ENCODE measurements at regions of chr10 and their contacts with region 1.

Region 1: GRCh38 chr10:77641788-77642397 is 4.3 kb upstream of the KCNMA1 start:
- DNase-seq: peak in 1 of 2 donors; percentile 66
- ATAC-seq: no peak
- H3K4me3 ChIP-seq: no peak overlapping the region
- H3K27ac ChIP-seq: no peak overlapping the region
- H3K4me1 ChIP-seq: peaks cover 0 to 14% (median 5%) of the 10 kb centered on the region in 9 donors
- H3K27me3 ChIP-seq: peaks cover 8 to 69% (median 50%) of the 10 kb centered on the region in 7 donors
- CTCF ChIP-seq: peak; percentile 67 to 86 (median 81)

Region 2: DNA sequence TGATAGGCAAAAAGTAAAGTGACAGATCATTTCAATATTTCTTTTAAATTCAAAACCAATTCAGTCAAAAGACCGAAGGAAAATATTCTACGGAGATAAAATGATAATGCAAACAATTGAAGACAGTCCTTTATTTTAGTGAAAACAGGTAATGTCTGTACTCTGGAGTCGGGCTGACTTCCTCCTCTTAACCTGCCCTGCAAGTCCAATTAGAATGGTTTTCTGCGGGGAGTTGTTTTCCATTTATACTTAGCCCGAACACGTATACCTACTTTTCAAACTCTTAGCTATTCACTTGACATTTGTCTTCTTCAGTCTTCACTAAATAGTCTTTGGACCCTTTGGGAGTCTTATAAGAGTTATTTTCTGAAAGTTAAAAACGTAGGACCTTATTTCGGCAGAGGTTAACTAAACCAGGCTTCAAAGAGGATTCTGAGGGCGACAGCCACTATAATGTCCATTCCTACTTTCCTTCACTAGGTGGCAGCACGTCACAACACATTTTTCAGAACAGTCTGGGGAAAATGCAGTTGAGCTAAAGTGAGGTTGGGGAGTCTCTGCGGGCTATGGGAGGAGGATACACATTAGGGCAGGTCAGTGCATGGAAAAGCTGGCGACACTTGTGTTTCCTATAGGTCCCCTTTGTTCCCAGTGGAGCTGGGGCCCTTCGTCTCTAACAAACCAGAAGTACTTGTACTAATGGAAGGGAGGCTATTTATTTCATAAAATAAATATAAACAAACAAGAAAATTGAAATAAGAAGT is 476.3 kb before region 1 on chr10:
- intact Hi-C with region 1: loop called in 2 of 10 experiments (anchors 2 to 5 kb)
- DNase-seq: peak in 1 of 2 donors; percentile 14
- ATAC-seq: peak in 7 of 8 donors; percentile 29 to 66 (median 56)
- H3K4me3 ChIP-seq: no peak overlapping the region
- H3K27ac ChIP-seq: no peak overlapping the region
- H3K4me1 ChIP-seq: peaks cover 0 to 19% (median 0%) of the 10 kb centered on the region in 9 donors
- H3K27me3 ChIP-seq: peaks cover 0 to 32% (median 19%) of the 10 kb centered on the region in 7 donors
- CTCF ChIP-seq: peak; percentile 47 to 80 (median 76)

Region 3: DNA sequence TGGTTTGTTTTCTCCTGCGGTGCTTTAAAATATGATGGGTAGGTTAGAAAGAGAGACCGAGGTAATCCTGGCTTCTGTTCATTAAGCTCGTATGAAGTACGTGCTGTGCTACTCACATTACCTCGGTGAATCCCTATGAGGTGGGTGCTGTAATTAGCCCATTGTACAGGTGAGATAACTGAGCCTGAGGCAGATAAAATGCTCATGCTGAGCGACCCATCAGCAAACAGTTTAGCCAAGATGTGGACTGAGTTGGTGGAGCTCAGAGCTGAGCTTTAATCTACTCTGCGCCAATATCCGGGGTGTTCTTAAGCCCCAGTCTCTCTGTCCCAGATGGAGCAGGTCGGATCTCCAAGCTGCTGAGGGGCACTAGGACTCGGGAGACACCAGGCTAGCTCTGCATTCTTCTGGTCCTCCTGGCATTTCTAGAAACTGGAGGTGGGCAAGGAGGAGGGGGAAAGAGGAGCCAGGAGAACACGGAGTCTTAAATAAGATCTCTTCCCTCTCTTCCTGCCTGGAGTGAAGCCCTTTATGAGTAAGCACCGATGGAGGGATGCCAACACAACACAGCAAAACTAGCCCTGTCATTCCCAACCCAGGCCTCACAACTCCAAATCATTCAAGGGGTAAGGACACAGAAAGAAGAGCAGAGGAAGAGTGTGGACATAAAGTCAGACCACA is 462.7 kb before region 1 on chr10:
- intact Hi-C with region 1: loop called in 8 of 10 experiments (anchors 1 to 5 kb)
- DNase-seq: peak in 1 of 2 donors; percentile 32
- ATAC-seq: peak in 3 of 8 donors; percentile 23 to 81 (median 35)
- H3K4me3 ChIP-seq: no peak overlapping the region
- H3K27ac ChIP-seq: no peak overlapping the region
- H3K4me1 ChIP-seq: peaks cover 0 to 14% (median 0%) of the 10 kb centered on the region in 9 donors
- H3K27me3 ChIP-seq: peaks cover 0 to 25% (median 8%) of the 10 kb centered on the region in 7 donors
- CTCF ChIP-seq: no peak

Region 4: GRCh38 chr10:77251297-77252013 is 390.4 kb before region 1 on chr10:
- intact Hi-C with region 1: loop called in 1 of 10 experiments (anchors 5 kb)
- DNase-seq: no peak
- ATAC-seq: no peak
- H3K4me3 ChIP-seq: no peak overlapping the region
- H3K27ac ChIP-seq: no peak overlapping the region
- H3K4me1 ChIP-seq: peaks cover 0 to 14% (median 3%) of the 10 kb centered on the region in 9 donors
- H3K27me3 ChIP-seq: peaks cover 0 to 14% (median 7%) of the 10 kb centered on the region in 7 donors
- CTCF ChIP-seq: peak in 6 of 9 donors; percentile 16 to 48 (median 38)

Region 5: DNA sequence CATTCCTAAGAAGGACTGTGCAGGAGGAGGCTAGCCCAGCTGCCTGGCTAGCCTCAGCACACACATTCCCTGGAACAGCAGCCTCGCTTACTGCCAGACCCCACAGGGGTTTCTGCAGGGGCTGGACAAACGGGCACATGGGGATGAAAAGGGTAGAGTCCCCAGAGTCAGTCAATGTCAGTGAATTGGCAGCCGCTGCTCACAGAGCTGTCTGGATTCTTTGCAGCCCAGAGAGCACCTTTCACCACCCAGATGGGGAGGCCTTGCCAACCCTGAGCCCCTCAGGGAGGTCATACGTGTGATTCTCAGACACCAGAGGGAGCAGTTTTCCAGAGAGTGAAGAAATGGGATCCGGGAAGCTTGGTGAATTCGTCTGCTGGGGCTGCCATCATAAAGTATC is 147.6 kb before region 1 on chr10:
- intact Hi-C with region 1: loop called in 7 of 10 experiments (anchors 2 to 10 kb)
- DNase-seq: no peak
- ATAC-seq: peak in 3 of 8 donors; percentile 16 to 59 (median 34)
- H3K4me3 ChIP-seq: no peak overlapping the region
- H3K27ac ChIP-seq: no peak overlapping the region
- H3K4me1 ChIP-seq: peaks cover 0 to 7% (median 0%) of the 10 kb centered on the region in 9 donors
- H3K27me3 ChIP-seq: peaks cover 0 to 11% (median 0%) of the 10 kb centered on the region in 7 donors
- CTCF ChIP-seq: peak in 7 of 9 donors; percentile 24 to 45 (median 35)

Region 6: GRCh38 chr10:77582710-77583115 is 59.2 kb before region 1 on chr10:
- intact Hi-C with region 1: no loop called
- DNase-seq: no peak
- ATAC-seq: peak in 1 of 8 donors; percentile 59
- H3K4me3 ChIP-seq: no peak overlapping the region
- H3K27ac ChIP-seq: no peak overlapping the region
- H3K4me1 ChIP-seq: peaks cover 0 to 14% (median 3%) of the 10 kb centered on the region in 9 donors
- H3K27me3 ChIP-seq: peaks cover 0 to 4% (median 0%) of the 10 kb centered on the region in 7 donors
- CTCF ChIP-seq: no peak

Region 7: DNA sequence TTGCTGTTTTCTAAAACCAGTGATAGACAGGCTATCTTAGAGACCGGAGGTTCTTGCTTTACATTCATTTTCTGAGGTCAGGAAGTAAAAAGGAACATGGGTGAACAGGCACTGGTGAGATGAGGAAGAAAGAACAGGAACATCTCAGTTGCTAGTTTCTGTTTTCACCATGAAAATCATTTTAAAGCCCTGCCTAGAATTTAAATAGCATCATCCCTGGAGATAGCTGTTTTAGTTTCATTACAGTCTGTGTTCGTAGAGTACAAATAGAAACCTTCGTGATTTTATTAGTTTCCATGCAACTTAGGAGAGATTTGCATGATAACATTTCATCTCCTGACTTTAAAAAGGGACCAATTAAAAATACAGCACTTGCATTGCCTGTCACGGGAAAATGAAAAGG is 19.0 kb before region 1 on chr10:
- intact Hi-C with region 1: no loop called
- DNase-seq: no peak
- ATAC-seq: peak in 2 of 8 donors; percentile 29 to 37
- H3K4me3 ChIP-seq: peak overlapping the region in 1 of 10 donors; percentile 4
- H3K27ac ChIP-seq: peak overlapping the region in 1 of 10 donors; percentile 58
- H3K4me1 ChIP-seq: peaks cover 0 to 46% (median 0%) of the 10 kb centered on the region in 9 donors
- H3K27me3 ChIP-seq: peaks cover 0 to 9% (median 0%) of the 10 kb centered on the region in 7 donors
- CTCF ChIP-seq: no peak